ENCODE measurements at regions of chr9 and their contacts with region 1.

Region 1: GRCh38 chr9:37790096-37790495 is 5.2 kb upstream of the EXOSC3 start:
- DNase-seq: no peak
- H3K4me3 ChIP-seq: no peak overlapping the region
- CTCF ChIP-seq: no peak
- POLR2A ChIP-seq: no peak

Region 2: GRCh38 chr9:36436909-36437308 is 1353.2 kb before region 1 on chr9:
- intact Hi-C with region 1: loop called (anchors 5 kb)
- DNase-seq: no peak
- H3K4me3 ChIP-seq: no peak overlapping the region
- CTCF ChIP-seq: no peak
- POLR2A ChIP-seq: no peak